Activated CD4-positive, alpha-beta T cell treated with anti-CD3 and anti-CD28 coated beads for 36 hours (primary cell): ENCODE measurements at regions of chr6 and their contacts with region 1.

Region 1: GRCh38 chr6:130132286-130132701 is 90.5 kb downstream of the SAMD3 start:
- DNase-seq: peak; percentile 72
- ATAC-seq: peak; percentile 89
- H3K4me3 Mint-ChIP-seq: peak overlapping the region; percentile 49
- H3K27ac Mint-ChIP-seq: peak overlapping the region; percentile 91
- H3K4me1 Mint-ChIP-seq: peaks cover 76% of the 10 kb centered on the region
- H3K27me3 Mint-ChIP-seq: no peaks in the 10 kb centered on the region

Region 2: GRCh38 chr6:130027948-130028347 is 104.3 kb before region 1 on chr6:
- CTCF ChIA-PET with region 1: no interaction called
- POLR2A ChIA-PET with region 1: no interaction called
- intact Hi-C with region 1: loop called in 1 of 2 experiments (anchors 5 kb)
- DNase-seq: no peak
- ATAC-seq: peak; percentile 67
- H3K4me3 Mint-ChIP-seq: no peak overlapping the region
- H3K27ac Mint-ChIP-seq: peak overlapping the region; percentile 66
- H3K4me1 Mint-ChIP-seq: peaks cover 62% of the 10 kb centered on the region
- H3K27me3 Mint-ChIP-seq: no peaks in the 10 kb centered on the region

Region 3: GRCh38 chr6:130037207-130037811 is 95.0 kb before region 1 on chr6:
- CTCF ChIA-PET with region 1: no interaction called
- POLR2A ChIA-PET with region 1: no interaction called
- intact Hi-C with region 1: loop called in 1 of 2 experiments (anchors 2 kb)
- DNase-seq: no peak
- ATAC-seq: no peak
- H3K4me3 Mint-ChIP-seq: no peak overlapping the region
- H3K27ac Mint-ChIP-seq: no peak overlapping the region
- H3K4me1 Mint-ChIP-seq: peaks cover 41% of the 10 kb centered on the region
- H3K27me3 Mint-ChIP-seq: no peaks in the 10 kb centered on the region

Region 4: DNA sequence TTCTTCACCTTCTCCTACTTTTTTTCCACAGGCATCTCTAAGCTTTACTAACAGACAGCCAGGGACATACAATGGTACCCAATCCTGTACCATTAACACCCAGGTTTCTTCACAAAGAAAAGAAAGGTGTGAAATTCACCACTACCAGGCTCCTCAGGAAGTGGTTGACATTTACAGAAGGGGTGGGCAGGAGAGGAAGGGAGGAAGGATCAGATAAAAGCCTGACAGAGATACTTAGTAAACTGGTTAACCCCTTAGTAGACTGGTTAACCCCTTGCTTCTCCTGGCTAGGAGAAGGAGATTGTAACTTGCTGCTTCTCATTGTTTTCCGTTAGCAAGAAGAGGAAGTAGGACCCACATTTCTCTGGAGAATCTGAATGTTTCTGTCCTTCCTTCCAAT is 83.2 kb after region 1 on chr6:
- CTCF ChIA-PET with region 1: no interaction called
- POLR2A ChIA-PET with region 1: no interaction called
- intact Hi-C with region 1: loop called in 1 of 2 experiments (anchors 5 kb)
- DNase-seq: peak; percentile 28
- ATAC-seq: peak; percentile 77
- H3K4me3 Mint-ChIP-seq: peak overlapping the region; percentile 51
- H3K27ac Mint-ChIP-seq: peak overlapping the region; percentile 53
- H3K4me1 Mint-ChIP-seq: peaks cover 62% of the 10 kb centered on the region
- H3K27me3 Mint-ChIP-seq: no peaks in the 10 kb centered on the region

Region 5: DNA sequence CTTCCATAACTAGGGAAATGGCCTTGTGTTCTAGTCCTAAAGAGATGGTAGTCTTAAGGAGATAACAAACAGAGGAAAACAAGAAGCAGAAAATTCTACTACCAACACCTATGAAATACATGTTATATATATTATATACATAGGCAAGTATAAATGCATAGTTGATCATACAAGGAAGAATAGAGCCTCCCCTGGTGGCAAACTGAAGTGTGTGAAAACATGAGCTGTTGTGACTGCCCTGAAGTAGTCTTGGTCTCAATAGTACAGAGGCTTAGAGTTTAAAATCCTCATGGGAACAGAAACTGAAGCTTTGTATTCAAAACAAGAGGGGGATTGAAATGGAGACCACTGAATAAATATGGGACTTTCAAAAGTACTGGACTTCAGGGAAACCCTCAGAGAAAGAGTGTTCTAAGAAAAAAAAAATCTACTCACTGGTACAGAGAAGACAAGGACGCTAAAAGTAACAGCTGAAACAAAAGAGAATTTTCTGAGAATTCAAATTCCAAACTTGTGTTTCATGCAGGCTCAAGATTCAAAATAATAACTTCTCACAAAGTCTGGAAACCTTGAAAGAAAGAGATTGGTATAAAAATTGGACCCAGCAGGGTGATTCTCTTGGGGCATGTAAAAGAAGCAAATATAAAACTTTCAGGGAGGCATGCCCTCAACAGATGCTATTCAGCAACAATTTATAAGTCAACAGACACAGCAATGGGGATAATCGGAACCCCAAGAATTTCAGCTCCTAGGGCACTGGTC is 150.1 kb after region 1 on chr6:
- CTCF ChIA-PET with region 1: no interaction called
- POLR2A ChIA-PET with region 1: no interaction called
- intact Hi-C with region 1: loop called in 1 of 2 experiments (anchors 5 kb)
- DNase-seq: peak; percentile 50
- ATAC-seq: peak; percentile 76
- H3K4me3 Mint-ChIP-seq: no peak overlapping the region
- H3K27ac Mint-ChIP-seq: no peak overlapping the region
- H3K4me1 Mint-ChIP-seq: peaks cover 7% of the 10 kb centered on the region
- H3K27me3 Mint-ChIP-seq: no peaks in the 10 kb centered on the region

Region 6: GRCh38 chr6:130513770-130514169 is 381.5 kb after region 1 on chr6:
- CTCF ChIA-PET with region 1: no interaction called
- POLR2A ChIA-PET with region 1: no interaction called
- intact Hi-C with region 1: loop called in 1 of 2 experiments (anchors 5 kb)
- DNase-seq: peak; percentile 62
- ATAC-seq: peak; percentile 81
- H3K4me3 Mint-ChIP-seq: no peak overlapping the region
- H3K27ac Mint-ChIP-seq: peak overlapping the region; percentile 76
- H3K4me1 Mint-ChIP-seq: peaks cover 61% of the 10 kb centered on the region
- H3K27me3 Mint-ChIP-seq: no peaks in the 10 kb centered on the region